ENCODE measurements at regions of chr5 and their contacts with region 1.

Region 1: DNA sequence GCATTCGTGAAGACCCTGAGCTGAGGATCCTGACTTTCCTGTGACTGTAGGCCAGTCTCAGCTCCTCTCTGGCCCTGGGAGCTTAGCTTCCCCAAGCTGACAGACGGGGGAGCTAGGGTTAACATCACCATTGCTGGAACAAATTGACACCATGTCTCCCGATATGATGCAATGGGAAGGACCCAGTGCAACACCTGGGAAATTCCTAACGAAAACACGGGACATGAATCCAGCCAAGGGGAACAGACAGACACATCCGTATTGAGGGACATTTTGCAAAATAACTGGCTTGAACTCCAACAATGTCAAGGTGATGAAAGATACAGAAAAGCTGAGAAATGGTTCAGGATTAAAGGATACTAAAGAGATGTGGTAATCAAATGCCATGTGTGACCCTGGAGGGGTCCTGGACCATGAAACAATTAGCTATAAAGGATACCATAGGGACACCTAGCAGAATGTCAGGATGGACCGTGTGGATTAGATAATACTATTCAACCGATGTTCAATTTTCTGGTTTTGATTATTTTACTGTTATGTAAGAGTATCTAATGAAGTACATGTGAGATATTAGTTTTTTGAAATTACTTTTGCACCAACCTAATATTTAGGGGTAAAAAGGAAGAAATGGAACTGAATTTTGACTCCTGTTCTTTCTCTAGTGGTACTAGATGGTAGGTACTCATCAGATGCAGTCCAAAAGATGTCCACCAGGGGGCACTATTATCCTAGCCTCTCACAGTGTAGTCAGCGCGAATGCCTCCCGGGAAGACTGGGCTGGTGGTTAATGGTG is 52.7 kb downstream of the NDST1 start:
- DNase-seq: peak; percentile 76 to 95 (median 91)
- H3K4me3 ChIP-seq: no peak overlapping the region
- H3K27ac ChIP-seq: no peak overlapping the region
- H3K4me1 ChIP-seq: peaks cover 0 to 6% (median 2%) of the 10 kb centered on the region in 3 donors
- H3K27me3 ChIP-seq: no peaks in the 10 kb centered on the region
- CTCF ChIP-seq: peak; percentile 95

Region 2: DNA sequence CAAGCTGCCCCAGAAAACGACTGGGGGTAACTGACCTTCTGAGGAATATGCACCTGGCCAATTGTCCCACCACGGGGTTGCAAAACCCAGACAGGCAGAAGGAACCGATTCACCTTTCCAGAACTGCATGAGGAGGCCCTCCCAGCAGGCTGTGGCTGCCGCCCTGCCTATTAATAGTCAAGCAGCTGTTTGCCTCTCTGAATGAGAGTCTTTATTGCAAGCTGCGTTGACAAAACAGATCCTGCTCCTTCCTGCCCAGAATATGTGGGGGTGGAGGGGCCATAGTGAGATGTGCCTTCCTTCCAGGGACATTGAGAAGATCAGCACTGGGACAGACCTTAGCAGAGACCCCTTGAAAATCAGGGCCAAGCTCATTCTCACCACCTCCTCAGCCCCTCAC is 221.4 kb before region 1 on chr5:
- intact Hi-C with region 1: no loop called
- DNase-seq: no peak
- H3K4me3 ChIP-seq: no peak overlapping the region
- H3K27ac ChIP-seq: no peak overlapping the region
- H3K4me1 ChIP-seq: no peaks in the 10 kb centered on the region
- H3K27me3 ChIP-seq: no peaks in the 10 kb centered on the region
- CTCF ChIP-seq: no peak

Region 3: GRCh38 chr5:150458819-150459557 is 101.6 kb before region 1 on chr5:
- intact Hi-C with region 1: no loop called
- DNase-seq: peak; percentile 73 to 92 (median 83)
- H3K4me3 ChIP-seq: peak overlapping the region in 1 of 3 donors; percentile 30
- H3K27ac ChIP-seq: no peak overlapping the region
- H3K4me1 ChIP-seq: no peaks in the 10 kb centered on the region
- H3K27me3 ChIP-seq: no peaks in the 10 kb centered on the region
- CTCF ChIP-seq: peak; percentile 91

Region 4: GRCh38 chr5:150656191-150657132 is 95.9 kb after region 1 on chr5:
- intact Hi-C with region 1: loop called (anchors 5 kb)
- DNase-seq: peak; percentile 86 to 94 (median 93)
- H3K4me3 ChIP-seq: peak overlapping the region in 2 of 3 donors; percentile 34 to 49
- H3K27ac ChIP-seq: no peak overlapping the region
- H3K4me1 ChIP-seq: peaks cover 0 to 14% (median 5%) of the 10 kb centered on the region in 3 donors
- H3K27me3 ChIP-seq: no peaks in the 10 kb centered on the region
- CTCF ChIP-seq: peak; percentile 75

Region 5: DNA sequence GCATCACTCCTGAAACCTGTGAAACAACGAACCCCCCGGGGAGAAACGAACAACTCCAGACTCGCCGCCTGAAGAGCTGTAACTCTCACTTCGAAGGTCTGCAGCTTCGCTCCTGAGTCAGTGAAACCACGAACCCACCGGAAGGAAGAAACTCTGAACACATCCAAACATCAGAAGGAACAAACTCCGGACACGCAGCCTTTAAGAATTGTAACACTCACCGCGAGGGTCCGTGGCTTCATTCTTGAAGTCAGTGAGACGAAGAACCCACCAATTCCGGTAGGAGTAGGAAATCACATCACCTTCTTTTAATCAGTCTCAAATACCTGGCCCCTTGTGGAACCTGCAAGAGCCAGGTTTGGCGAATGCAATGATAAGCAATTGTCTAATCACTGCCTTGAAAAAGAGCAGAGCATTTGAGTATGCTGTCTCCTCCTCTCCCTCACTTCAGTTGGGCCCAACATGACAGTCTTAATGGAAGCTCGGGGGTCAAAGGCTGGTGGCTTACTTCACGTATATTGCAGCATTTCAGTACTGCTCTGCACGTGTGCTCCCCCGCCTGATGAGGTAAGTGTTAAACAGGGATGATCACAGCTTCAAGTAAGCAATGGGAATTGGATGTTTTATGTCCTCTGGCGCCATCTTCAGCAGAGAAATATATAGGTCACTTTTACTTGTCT is 286.2 kb after region 1 on chr5:
- intact Hi-C with region 1: loop called (anchors 10 kb)
- DNase-seq: peak in 4 of 5 donors; percentile 61 to 94 (median 78)
- H3K4me3 ChIP-seq: no peak overlapping the region
- H3K27ac ChIP-seq: no peak overlapping the region
- H3K4me1 ChIP-seq: peaks cover 0 to 2% (median 0%) of the 10 kb centered on the region in 3 donors
- H3K27me3 ChIP-seq: no peaks in the 10 kb centered on the region
- CTCF ChIP-seq: peak; percentile 65